B cell (primary cell): ENCODE measurements at regions of chr11 and their contacts with region 1.

Region 1: DNA sequence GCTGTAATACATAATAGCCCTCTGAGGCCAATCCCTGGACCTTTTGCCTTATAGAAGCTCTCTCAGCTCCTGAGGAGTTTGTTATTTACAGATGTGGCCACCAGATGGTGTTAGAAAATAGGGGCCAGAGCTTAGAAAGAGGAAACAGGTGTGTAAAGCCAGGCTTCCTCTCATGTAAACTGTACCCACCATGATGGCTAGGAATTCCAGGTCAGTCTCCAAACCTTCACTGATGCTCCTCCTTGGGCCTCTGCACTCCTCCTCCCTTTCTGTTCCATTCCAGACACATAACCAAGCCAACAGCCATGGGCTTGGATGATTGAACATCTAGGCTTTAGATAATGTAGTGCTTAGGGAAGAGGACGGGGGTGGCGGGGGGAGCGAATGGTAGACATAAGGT is 39.7 kb downstream of the USP35 start:
- DNase-seq: peak; percentile 73
- ATAC-seq: peak; percentile 79
- H3K4me3 ChIP-seq: no peak overlapping the region
- H3K4me3 Mint-ChIP-seq: no peak overlapping the region
- H3K27ac ChIP-seq: peak overlapping the region in 1 of 2 donors; percentile 2
- H3K27ac Mint-ChIP-seq: no peak overlapping the region
- H3K4me1 ChIP-seq: peaks cover 38 to 42% of the 10 kb centered on the region in 2 donors
- H3K4me1 Mint-ChIP-seq: peaks cover 52% of the 10 kb centered on the region
- H3K27me3 ChIP-seq: no peaks in the 10 kb centered on the region
- H3K27me3 Mint-ChIP-seq: no peaks in the 10 kb centered on the region
- CTCF ChIP-seq: peak; percentile 78

Region 2: DNA sequence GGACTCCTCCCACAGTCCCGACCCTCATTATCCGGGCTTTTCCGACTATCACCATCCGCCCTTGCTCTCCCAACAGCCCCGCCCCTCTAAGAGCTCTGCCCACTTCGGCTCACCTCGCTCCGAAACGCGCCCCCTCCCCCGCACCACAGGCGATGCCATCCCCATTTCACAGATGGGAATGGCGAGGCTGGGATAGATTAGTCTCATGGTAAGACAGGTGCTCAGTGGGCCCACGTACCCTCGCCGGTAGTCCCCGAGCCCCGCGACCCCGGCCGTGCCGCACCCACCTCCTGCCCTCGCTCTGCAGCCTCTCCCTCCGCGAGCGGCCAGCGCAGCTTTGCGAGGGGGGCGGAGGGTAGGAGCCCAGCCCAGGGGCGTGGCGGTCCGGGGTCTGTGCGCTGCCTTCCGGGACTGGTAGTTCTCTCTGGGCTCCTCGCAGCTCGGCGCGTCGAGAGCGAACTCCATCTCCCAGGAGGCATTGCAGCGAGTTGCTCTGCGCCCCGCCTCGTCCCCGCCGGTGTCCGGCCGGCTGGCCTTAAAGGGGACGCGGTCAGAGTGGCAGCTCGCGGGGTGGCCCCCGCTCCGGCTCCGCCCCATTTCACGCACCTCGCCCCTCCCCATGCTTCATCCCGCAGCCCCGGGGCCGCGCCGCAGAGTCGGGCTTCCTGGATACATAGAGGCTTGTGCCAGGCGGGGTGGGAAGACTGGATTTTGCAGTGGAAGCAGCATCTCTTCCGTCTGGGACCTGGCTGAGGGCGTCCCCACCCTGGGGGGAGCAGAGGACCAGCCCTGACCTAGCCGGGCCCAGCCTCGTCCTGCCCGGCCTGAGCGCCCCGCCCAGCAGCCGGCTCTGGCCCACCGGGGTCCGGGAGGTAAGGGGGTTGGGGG is 39.9 kb before region 1 on chr11 and contains the starts of genes KCTD21 and USP35:
- CTCF ChIA-PET with region 1: interaction called, 3 read pairs
- POLR2A ChIA-PET with region 1: no interaction called
- intact Hi-C with region 1: loop called (anchors 5 kb)
- DNase-seq: peak; percentile 93
- ATAC-seq: peak; percentile 93
- H3K4me3 ChIP-seq: peak within 1 kb of the TSS; percentile 67 to 96 (median 90)
- H3K4me3 Mint-ChIP-seq: peak within 1 kb of the TSS; percentile 100
- H3K27ac ChIP-seq: peak within 1 kb of the TSS; percentile 55 to 77
- H3K27ac Mint-ChIP-seq: peak within 1 kb of the TSS; percentile 93
- H3K4me1 ChIP-seq: peaks cover 24 to 28% of the 10 kb centered on the region in 2 donors
- H3K4me1 Mint-ChIP-seq: peaks cover 45% of the 10 kb centered on the region
- H3K27me3 ChIP-seq: no peaks in the 10 kb centered on the region
- H3K27me3 Mint-ChIP-seq: no peaks in the 10 kb centered on the region
- CTCF ChIP-seq: no peak
- total RNA-seq, gene KCTD21: 6.3 and 8.0 TPM in 2 replicates
- total RNA-seq, gene USP35: 4.5 and 6.0 TPM in 2 replicates

Region 3: DNA sequence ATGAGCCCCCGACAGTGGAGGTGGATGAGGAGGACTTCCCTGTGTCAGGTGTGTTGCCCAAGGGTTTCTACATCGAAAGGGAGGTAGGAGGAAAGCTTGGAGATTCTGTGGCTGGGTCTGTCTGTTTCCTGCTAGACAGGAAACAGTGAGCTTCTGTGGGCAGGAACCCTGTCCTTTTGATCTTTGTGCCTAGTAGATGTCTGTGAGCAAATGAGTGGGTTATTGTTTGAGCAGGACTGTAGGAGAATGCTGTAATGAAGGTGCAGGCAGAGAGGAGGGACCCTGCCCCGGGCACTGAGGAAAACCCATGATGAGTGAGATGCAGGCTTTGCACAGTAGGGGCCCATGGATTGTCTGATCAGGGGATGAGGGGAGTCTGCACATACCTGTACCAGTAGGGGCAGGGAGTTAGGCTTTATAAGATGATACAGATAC is 25.7 kb before region 1 on chr11:
- CTCF ChIA-PET with region 1: no interaction called
- POLR2A ChIA-PET with region 1: no interaction called
- intact Hi-C with region 1: no loop called
- DNase-seq: no peak
- ATAC-seq: no peak
- H3K4me3 ChIP-seq: no peak overlapping the region
- H3K4me3 Mint-ChIP-seq: peak overlapping the region; percentile 14
- H3K27ac ChIP-seq: no peak overlapping the region
- H3K27ac Mint-ChIP-seq: peak overlapping the region; percentile 37
- H3K4me1 ChIP-seq: peaks cover 14 to 15% of the 10 kb centered on the region in 2 donors
- H3K4me1 Mint-ChIP-seq: peaks cover 18% of the 10 kb centered on the region
- H3K27me3 ChIP-seq: no peaks in the 10 kb centered on the region
- H3K27me3 Mint-ChIP-seq: no peaks in the 10 kb centered on the region
- CTCF ChIP-seq: no peak

Region 4: GRCh38 chr11:78424334-78425270 is 196.1 kb after region 1 on chr11:
- CTCF ChIA-PET with region 1: interaction called, 39 read pairs
- POLR2A ChIA-PET with region 1: no interaction called
- intact Hi-C with region 1: no loop called
- DNase-seq: peak; percentile 71
- ATAC-seq: peak; percentile 13
- H3K4me3 ChIP-seq: peak overlapping the region in 2 of 5 experiments; percentile 22 to 34
- H3K4me3 Mint-ChIP-seq: peak overlapping the region; percentile 80
- H3K27ac ChIP-seq: peak overlapping the region; percentile 52 to 79
- H3K27ac Mint-ChIP-seq: peak overlapping the region; percentile 94
- H3K4me1 ChIP-seq: peaks cover 60 to 64% of the 10 kb centered on the region in 2 donors
- H3K4me1 Mint-ChIP-seq: peaks cover 75% of the 10 kb centered on the region
- H3K27me3 ChIP-seq: no peaks in the 10 kb centered on the region
- H3K27me3 Mint-ChIP-seq: no peaks in the 10 kb centered on the region
- CTCF ChIP-seq: no peak

Region 5: DNA sequence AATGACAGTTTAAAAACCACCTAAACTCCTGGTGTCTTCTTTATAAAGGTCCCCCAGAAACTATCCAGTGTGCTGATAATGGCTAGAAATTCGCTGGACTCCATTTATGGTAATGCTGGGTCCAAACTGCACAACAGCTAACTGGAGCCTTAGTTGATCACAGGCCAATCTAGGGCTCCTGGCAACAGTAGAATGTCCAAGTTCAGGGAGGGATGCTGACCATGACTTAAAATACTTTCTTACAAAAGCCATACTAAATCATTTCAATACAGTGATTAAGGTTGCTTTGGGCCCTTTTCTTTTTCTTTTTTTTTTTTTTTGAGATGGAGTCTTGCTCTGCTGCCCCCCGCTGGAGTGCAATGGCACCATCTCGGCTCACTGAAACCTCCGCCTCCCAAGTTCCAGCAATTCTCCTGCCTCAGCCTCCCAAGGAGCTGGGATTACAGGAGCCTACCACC is 203.6 kb after region 1 on chr11:
- CTCF ChIA-PET with region 1: interaction called, 39 read pairs
- POLR2A ChIA-PET with region 1: no interaction called
- intact Hi-C with region 1: loop called (anchors 1 kb)
- DNase-seq: peak; percentile 44
- ATAC-seq: no peak
- H3K4me3 ChIP-seq: no peak overlapping the region
- H3K4me3 Mint-ChIP-seq: no peak overlapping the region
- H3K27ac ChIP-seq: no peak overlapping the region
- H3K27ac Mint-ChIP-seq: peak overlapping the region; percentile 20
- H3K4me1 ChIP-seq: peaks cover 34 to 38% of the 10 kb centered on the region in 2 donors
- H3K4me1 Mint-ChIP-seq: peaks cover 42% of the 10 kb centered on the region
- H3K27me3 ChIP-seq: no peaks in the 10 kb centered on the region
- H3K27me3 Mint-ChIP-seq: no peaks in the 10 kb centered on the region
- CTCF ChIP-seq: peak; percentile 72

Region 6: GRCh38 chr11:78635814-78636506 is 407.5 kb after region 1 on chr11:
- CTCF ChIA-PET with region 1: no interaction called
- POLR2A ChIA-PET with region 1: no interaction called
- intact Hi-C with region 1: no loop called
- DNase-seq: no peak
- ATAC-seq: no peak
- H3K4me3 ChIP-seq: no peak overlapping the region
- H3K4me3 Mint-ChIP-seq: no peak overlapping the region
- H3K27ac ChIP-seq: no peak overlapping the region
- H3K27ac Mint-ChIP-seq: no peak overlapping the region
- H3K4me1 ChIP-seq: no peaks in the 10 kb centered on the region
- H3K4me1 Mint-ChIP-seq: no peaks in the 10 kb centered on the region
- H3K27me3 ChIP-seq: peaks cover 0 to 18% (median 4%) of the 10 kb centered on the region in 4 experiments
- H3K27me3 Mint-ChIP-seq: peaks cover 19% of the 10 kb centered on the region
- CTCF ChIP-seq: no peak

Region 7: GRCh38 chr11:78698612-78699011 is 470.1 kb after region 1 on chr11:
- CTCF ChIA-PET with region 1: no interaction called
- POLR2A ChIA-PET with region 1: no interaction called
- intact Hi-C with region 1: no loop called
- DNase-seq: no peak
- ATAC-seq: no peak
- H3K4me3 ChIP-seq: no peak overlapping the region
- H3K4me3 Mint-ChIP-seq: no peak overlapping the region
- H3K27ac ChIP-seq: no peak overlapping the region
- H3K27ac Mint-ChIP-seq: no peak overlapping the region
- H3K4me1 ChIP-seq: no peaks in the 10 kb centered on the region
- H3K4me1 Mint-ChIP-seq: no peaks in the 10 kb centered on the region
- H3K27me3 ChIP-seq: no peaks in the 10 kb centered on the region
- H3K27me3 Mint-ChIP-seq: peaks cover 24% of the 10 kb centered on the region
- CTCF ChIP-seq: no peak